ENCODE measurements at regions of chr14 and their contacts with region 1.

Region 1: DNA sequence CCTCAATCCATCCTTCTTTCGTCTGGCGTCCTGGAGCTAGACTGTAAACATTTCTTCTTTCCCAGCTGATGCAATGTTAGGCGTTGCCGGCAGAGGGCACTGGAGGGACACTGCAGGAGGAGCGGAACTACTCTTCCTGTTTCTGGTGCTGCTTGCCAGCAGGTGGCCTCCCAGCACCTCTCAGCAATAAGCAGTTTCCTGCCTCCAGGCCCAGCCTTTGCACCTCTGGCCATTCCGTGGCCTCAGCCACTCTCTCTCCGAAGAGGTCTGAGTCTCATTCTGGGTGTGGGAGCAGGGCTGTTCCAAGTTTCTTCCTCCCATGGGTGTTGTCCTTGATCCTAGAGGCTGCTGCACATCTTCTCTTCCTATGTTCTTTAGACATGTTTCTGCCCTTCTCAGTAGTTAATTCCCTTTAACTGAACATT is 7.5 kb upstream of the ASPG start:
- DNase-seq: peak; percentile 84 to 92 (median 92)
- ATAC-seq: peak; percentile 86 to 89
- H3K4me3 ChIP-seq: no peak overlapping the region
- H3K27ac ChIP-seq: no peak overlapping the region
- H3K4me1 ChIP-seq: no peaks in the 10 kb centered on the region
- H3K27me3 ChIP-seq: no peaks in the 10 kb centered on the region

Region 2: GRCh38 chr14:104011824-104012468 is 66.1 kb before region 1 on chr14:
- intact Hi-C with region 1: no loop called
- DNase-seq: no peak
- ATAC-seq: peak; percentile 45 to 60
- H3K4me3 ChIP-seq: no peak overlapping the region
- H3K27ac ChIP-seq: no peak overlapping the region
- H3K4me1 ChIP-seq: no peaks in the 10 kb centered on the region
- H3K27me3 ChIP-seq: no peaks in the 10 kb centered on the region

Region 3: GRCh38 chr14:104130974-104131651 is 53.1 kb after region 1 on chr14:
- intact Hi-C with region 1: loop called in 3 of 4 experiments (anchors 1 to 2 kb)
- DNase-seq: peak; percentile 62 to 88 (median 86)
- ATAC-seq: peak; percentile 55
- H3K4me3 ChIP-seq: no peak overlapping the region
- H3K27ac ChIP-seq: no peak overlapping the region
- H3K4me1 ChIP-seq: no peaks in the 10 kb centered on the region
- H3K27me3 ChIP-seq: no peaks in the 10 kb centered on the region